ENCODE measurements at regions of chr4 and their contacts with region 1.

Region 1: DNA sequence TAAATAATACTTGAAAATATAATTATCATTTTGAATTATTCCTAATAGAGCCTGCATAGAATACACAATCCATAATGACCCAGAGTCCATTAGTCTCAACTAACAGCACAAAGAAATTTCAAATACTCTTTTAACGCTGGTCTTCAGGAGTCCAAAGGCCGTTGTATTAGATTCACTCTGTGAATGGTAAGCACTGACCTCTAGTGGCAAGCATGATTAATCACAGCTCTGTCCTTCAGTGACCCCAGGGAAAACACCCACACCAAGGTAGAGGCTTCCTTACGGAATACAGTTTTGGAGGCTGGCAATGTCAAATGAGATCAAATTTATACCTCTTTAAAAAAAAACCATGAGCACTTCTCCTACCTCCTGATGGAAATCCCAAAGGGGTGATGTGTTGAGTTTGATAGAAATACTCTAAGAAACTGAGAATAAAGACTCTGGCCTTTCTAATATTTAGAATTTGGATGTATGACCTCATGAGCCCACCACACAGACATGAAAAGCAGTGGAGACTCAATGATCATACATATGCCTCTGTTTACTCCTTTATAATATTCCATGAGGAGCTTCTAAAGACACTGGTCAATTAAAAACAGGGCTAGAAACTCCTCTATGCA is 147.2 kb upstream of the DKK2 start:
- DNase-seq: peak; percentile 6
- H3K4me3 Mint-ChIP-seq: no peak overlapping the region
- H3K27ac Mint-ChIP-seq: no peak overlapping the region
- H3K4me1 Mint-ChIP-seq: no peaks in the 10 kb centered on the region
- H3K27me3 Mint-ChIP-seq: peaks cover 4% of the 10 kb centered on the region

Region 2: DNA sequence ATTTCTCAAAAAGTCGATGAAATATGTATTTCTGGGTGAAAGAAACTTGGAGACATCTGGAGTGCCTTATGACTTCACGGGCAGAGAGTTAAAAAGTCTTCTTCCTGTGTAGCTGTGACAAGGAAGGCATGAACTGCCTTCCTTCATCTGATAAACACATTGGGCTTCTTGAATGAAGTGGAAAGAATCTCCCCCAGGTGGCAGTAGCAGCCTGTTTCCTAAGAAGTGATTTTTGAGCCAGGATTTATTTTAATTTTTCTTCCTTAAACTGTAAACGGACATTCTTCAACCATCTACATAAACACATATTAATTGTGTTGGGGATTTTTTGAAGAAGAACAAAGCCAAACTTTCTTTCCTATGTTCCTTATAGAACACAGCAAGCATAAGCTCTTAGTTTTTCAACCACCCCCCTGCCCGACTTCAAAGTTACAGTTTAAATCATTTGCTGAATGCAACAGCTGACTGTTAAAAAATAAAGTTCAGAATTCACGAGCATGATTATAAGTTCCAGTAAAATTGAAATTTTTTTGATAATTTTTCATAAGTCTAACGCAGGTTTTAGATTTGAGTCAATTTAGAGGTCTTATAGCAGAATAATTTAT is 813.7 kb before region 1 on chr4:
- CTCF ChIA-PET with region 1: interaction called, 4 read pairs
- intact Hi-C with region 1: loop called (anchors 1 kb)
- DNase-seq: peak; percentile 41
- H3K4me3 Mint-ChIP-seq: no peak overlapping the region
- H3K27ac Mint-ChIP-seq: no peak overlapping the region
- H3K4me1 Mint-ChIP-seq: no peaks in the 10 kb centered on the region
- H3K27me3 Mint-ChIP-seq: peaks cover 22% of the 10 kb centered on the region

Region 3: DNA sequence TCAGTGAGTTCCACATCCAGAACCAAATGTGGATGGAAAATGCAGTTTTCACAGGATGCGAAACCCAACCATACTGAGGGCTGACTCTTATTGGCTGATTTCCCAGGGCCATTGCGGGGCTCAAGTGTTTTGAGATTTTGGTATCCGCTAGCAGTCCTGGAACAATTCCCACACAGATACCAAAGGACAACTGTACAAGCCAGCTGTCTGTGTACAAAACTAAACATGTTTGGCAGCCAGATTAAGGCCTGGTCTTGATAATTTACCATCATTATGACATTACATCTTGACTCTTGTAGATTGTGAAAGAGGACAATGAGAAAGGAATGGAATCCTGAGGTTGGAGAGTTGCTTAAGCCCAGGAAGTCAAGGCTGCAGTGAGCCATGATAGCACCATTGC is 269.0 kb before region 1 on chr4:
- CTCF ChIA-PET with region 1: no interaction called
- intact Hi-C with region 1: loop called (anchors 10 kb)
- DNase-seq: no peak
- H3K4me3 Mint-ChIP-seq: no peak overlapping the region
- H3K27ac Mint-ChIP-seq: no peak overlapping the region
- H3K4me1 Mint-ChIP-seq: no peaks in the 10 kb centered on the region
- H3K27me3 Mint-ChIP-seq: peaks cover 2% of the 10 kb centered on the region

Region 4: DNA sequence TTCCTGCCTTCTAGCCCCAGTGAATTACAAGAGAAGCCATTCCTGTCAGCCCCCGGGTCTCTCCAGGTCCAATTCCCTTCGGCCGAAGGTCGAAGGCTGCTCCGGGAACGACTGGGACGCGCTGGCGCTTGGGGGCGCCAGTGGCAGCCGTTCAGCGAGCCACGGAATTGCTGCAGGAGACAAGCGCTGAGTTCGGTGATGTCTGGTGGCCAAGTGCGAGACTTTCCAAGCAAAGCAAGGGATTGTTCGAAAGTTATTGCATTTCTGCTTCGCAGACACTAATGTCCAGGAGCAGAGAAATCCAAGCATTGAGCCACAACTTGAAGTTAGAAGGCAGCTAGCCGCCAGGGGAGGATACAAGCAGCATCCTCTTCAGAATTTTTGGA is 146.1 kb before region 1 on chr4:
- CTCF ChIA-PET with region 1: interaction called, 3 read pairs
- intact Hi-C with region 1: loop called (anchors 2 kb)
- DNase-seq: peak; percentile 14
- H3K4me3 Mint-ChIP-seq: no peak overlapping the region
- H3K27ac Mint-ChIP-seq: no peak overlapping the region
- H3K4me1 Mint-ChIP-seq: peaks cover 27% of the 10 kb centered on the region
- H3K27me3 Mint-ChIP-seq: peaks cover 61% of the 10 kb centered on the region

Region 5: DNA sequence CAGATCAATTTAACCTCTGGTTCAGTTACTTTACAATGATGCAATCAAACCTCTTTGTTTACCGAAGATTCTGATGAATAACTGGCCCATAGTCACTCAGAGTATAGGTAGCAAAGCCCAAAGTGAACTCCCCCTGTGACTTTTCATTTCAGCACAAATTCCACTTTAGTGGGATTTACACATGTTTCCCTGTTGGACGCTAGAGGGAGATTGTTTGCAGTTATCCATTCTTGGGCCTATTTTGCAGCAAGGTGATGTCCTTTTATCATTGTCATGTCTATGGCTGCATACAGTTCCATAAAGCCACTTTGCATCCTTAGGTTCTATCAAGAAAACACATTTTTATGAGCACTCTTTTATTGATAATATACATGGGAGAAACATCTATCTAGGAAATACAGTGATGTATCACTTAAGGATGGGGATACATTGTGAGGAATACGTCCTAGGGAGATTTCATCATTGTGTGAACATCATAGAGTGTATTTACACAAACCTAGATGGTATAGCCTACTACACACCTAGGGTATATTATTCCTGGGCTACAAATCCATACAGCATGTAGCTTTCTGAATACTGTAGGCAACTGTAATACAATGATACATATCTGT is 132.6 kb before region 1 on chr4:
- CTCF ChIA-PET with region 1: no interaction called
- intact Hi-C with region 1: loop called (anchors 2 kb)
- DNase-seq: no peak
- H3K4me3 Mint-ChIP-seq: no peak overlapping the region
- H3K27ac Mint-ChIP-seq: no peak overlapping the region
- H3K4me1 Mint-ChIP-seq: no peaks in the 10 kb centered on the region
- H3K27me3 Mint-ChIP-seq: peaks cover 2% of the 10 kb centered on the region